ENCODE measurements at regions of chr11 and their contacts with region 1.

Region 1: GRCh38 chr11:122202951-122203456 is 87.0 kb upstream of the BLID start:
- DNase-seq: peak; percentile 70 to 83
- ATAC-seq: peak; percentile 92 to 96 (median 94)
- H3K4me3 ChIP-seq: peak overlapping the region; percentile 54
- H3K27ac ChIP-seq: no peak overlapping the region
- H3K4me1 ChIP-seq: peaks cover 15% of the 10 kb centered on the region
- H3K27me3 ChIP-seq: no peaks in the 10 kb centered on the region
- CTCF ChIP-seq: peak; percentile 98

Region 2: DNA sequence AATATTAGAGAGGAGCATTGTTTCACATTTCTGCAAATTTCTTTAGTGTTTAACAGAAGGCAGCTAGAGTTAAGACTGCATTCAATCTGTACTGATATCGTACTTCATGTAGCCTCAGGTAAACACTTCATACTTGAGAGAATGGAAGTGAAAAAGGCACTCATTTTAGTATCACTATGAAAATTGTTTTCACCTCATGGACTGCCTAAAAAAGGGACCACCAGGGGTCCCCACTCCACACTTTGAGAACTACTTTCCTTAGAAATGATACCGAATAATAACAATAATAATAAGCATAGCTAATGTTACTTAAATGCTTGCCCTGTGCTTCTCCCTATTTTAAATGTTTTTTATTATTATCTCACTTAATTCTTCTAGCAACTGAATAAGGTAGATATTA is 182.1 kb before region 1 on chr11:
- intact Hi-C with region 1: loop called in 1 of 2 experiments (anchors 5 kb)
- DNase-seq: no peak
- ATAC-seq: no peak
- H3K4me3 ChIP-seq: no peak overlapping the region
- H3K27ac ChIP-seq: no peak overlapping the region
- H3K4me1 ChIP-seq: no peaks in the 10 kb centered on the region
- H3K27me3 ChIP-seq: no peaks in the 10 kb centered on the region
- CTCF ChIP-seq: peak; percentile 45

Region 3: DNA sequence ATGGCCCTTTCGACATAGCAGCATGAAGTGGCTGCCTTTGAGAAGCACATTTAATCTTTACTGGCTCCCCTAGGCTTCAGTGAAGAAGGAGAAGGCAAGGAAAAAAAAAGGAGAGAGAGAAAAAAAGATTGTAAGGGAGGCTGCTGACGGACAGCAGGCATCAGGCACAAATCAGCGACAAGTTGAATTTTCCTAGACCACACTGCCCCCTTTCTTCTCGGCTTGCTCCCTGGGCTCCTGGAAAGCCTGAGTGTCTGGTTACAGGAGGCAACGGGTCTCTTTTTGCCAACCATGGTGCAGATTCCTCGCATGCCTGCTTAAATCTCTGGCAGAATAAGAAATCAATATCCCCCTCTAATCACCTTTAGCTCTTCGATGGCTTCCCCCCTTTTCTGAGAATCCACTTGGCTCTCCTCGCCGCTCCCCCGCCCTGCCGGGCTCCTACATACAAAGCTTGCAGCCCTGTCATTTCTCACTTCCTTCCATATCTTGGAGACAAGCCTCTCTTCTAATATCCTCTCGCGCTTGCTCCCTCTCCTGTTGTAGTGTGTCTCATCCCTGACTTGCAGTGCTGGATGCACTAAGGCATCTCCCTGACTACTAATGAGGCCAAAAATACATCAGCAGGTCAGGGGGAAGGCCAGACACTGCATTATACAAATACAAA is 101.2 kb before region 1 on chr11:
- intact Hi-C with region 1: loop called (anchors 2 to 5 kb)
- DNase-seq: peak; percentile 49 to 67
- ATAC-seq: peak; percentile 78 to 87 (median 86)
- H3K4me3 ChIP-seq: peak overlapping the region; percentile 76
- H3K27ac ChIP-seq: peak overlapping the region; percentile 90
- H3K4me1 ChIP-seq: peaks cover 11% of the 10 kb centered on the region
- H3K27me3 ChIP-seq: peaks cover 0 to 6% (median 0%) of the 10 kb centered on the region in 3 donors
- CTCF ChIP-seq: peak; percentile 61

Region 4: GRCh38 chr11:122108192-122108799 is 94.7 kb before region 1 on chr11:
- intact Hi-C with region 1: loop called (anchors 2 to 5 kb)
- DNase-seq: no peak
- ATAC-seq: peak; percentile 35 to 51 (median 50)
- H3K4me3 ChIP-seq: no peak overlapping the region
- H3K27ac ChIP-seq: peak overlapping the region; percentile 84
- H3K4me1 ChIP-seq: peaks cover 6% of the 10 kb centered on the region
- H3K27me3 ChIP-seq: no peaks in the 10 kb centered on the region
- CTCF ChIP-seq: peak; percentile 52

Region 5: GRCh38 chr11:122517403-122518379 is 314.7 kb after region 1 on chr11:
- intact Hi-C with region 1: no loop called
- DNase-seq: no peak
- ATAC-seq: no peak
- H3K4me3 ChIP-seq: no peak overlapping the region
- H3K27ac ChIP-seq: no peak overlapping the region
- H3K4me1 ChIP-seq: no peaks in the 10 kb centered on the region
- H3K27me3 ChIP-seq: peaks cover 0 to 17% (median 0%) of the 10 kb centered on the region in 3 donors
- CTCF ChIP-seq: no peak